Dorsolateral prefrontal cortex (tissue), 120 donors: ENCODE measurements at regions of chr7 and their contacts with region 1.

Region 1: GRCh38 chr7:150778738-150779301 is 21.3 kb downstream of the TMEM176B start:
- DNase-seq: peak; percentile 72 to 94 (median 82)
- H3K4me3 ChIP-seq: peak overlapping the region in 5 of 59 donors; percentile 1 to 22 (median 18)
- H3K27ac ChIP-seq: no peak overlapping the region
- H3K27me3 ChIP-seq: peaks cover 0 to 13% (median 0%) of the 10 kb centered on the region in 45 donors
- CTCF ChIP-seq: peak; percentile 79 to 98 (median 91)

Region 2: GRCh38 chr7:150876817-150877526 is 98.2 kb after region 1 on chr7:
- intact Hi-C with region 1: loop called (anchors 5 kb)
- DNase-seq: peak in 1 of 10 donors; percentile 30
- H3K4me3 ChIP-seq: peak overlapping the region in 3 of 59 donors; percentile 25 to 34 (median 30)
- H3K27ac ChIP-seq: peak overlapping the region in 29 of 59 donors; percentile 1 to 72 (median 39)
- H3K27me3 ChIP-seq: peaks cover 0 to 6% (median 0%) of the 10 kb centered on the region in 45 donors
- CTCF ChIP-seq: peak in 53 of 56 donors; percentile 23 to 62 (median 44)